Sigmoid colon (tissue), 7 donors: ENCODE measurements at regions of chr14 and their contacts with region 1.

Region 1: GRCh38 chr14:59213368-59214315 is 25.2 kb downstream of the DAAM1 start:
- DNase-seq: no peak
- H3K4me3 ChIP-seq: no peak overlapping the region
- H3K27ac ChIP-seq: peak overlapping the region; percentile 65 to 79 (median 76)
- H3K4me1 ChIP-seq: peaks cover 0 to 100% (median 93%) of the 10 kb centered on the region in 4 donors
- H3K27me3 ChIP-seq: no peaks in the 10 kb centered on the region
- CTCF ChIP-seq: no peak
- EP300 ChIP-seq: no peak
- POLR2A ChIP-seq: no peak

Region 2: DNA sequence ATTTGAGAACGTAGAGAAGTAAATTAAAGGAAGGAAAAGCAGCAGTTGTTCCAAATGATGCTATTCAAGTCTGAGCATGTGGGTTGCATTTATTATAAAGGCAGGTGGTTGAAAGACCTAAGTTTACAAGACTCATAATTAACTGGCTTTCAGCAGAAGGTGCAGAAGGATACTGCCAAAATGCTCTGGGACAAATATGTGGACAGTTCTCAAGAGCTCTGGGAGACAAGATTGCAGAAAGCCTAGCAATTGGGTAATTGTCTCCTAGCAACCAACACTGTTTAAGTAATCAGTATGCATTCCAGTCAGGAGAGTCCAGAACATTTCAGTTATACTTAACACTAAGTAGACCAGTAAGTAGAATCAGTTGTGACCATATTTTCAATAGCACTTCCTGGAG is 120.0 kb after region 1 on chr14:
- intact Hi-C with region 1: loop called (anchors 5 kb)
- DNase-seq: peak; percentile 78
- H3K4me3 ChIP-seq: no peak overlapping the region
- H3K27ac ChIP-seq: peak overlapping the region; percentile 78 to 89 (median 84)
- H3K4me1 ChIP-seq: peaks cover 0 to 89% (median 78%) of the 10 kb centered on the region in 4 donors
- H3K27me3 ChIP-seq: no peaks in the 10 kb centered on the region
- CTCF ChIP-seq: no peak
- EP300 ChIP-seq: peak; percentile 45 to 93 (median 73)
- POLR2A ChIP-seq: no peak